B cell (primary cell): ENCODE measurements at regions of chr4 and their contacts with region 1.

Region 1: GRCh38 chr4:77193511-77194102 is 36.6 kb downstream of the CCNG2 start:
- DNase-seq: peak; percentile 91
- ATAC-seq: peak; percentile 92
- H3K4me3 ChIP-seq: peak overlapping the region; percentile 22 to 60 (median 49)
- H3K4me3 Mint-ChIP-seq: peak overlapping the region; percentile 91
- H3K27ac ChIP-seq: peak overlapping the region; percentile 69 to 86
- H3K27ac Mint-ChIP-seq: peak overlapping the region; percentile 97
- H3K4me1 ChIP-seq: peaks cover 36 to 49% of the 10 kb centered on the region in 2 donors
- H3K4me1 Mint-ChIP-seq: peaks cover 52% of the 10 kb centered on the region
- H3K27me3 ChIP-seq: no peaks in the 10 kb centered on the region
- H3K27me3 Mint-ChIP-seq: no peaks in the 10 kb centered on the region
- CTCF ChIP-seq: no peak

Region 2: DNA sequence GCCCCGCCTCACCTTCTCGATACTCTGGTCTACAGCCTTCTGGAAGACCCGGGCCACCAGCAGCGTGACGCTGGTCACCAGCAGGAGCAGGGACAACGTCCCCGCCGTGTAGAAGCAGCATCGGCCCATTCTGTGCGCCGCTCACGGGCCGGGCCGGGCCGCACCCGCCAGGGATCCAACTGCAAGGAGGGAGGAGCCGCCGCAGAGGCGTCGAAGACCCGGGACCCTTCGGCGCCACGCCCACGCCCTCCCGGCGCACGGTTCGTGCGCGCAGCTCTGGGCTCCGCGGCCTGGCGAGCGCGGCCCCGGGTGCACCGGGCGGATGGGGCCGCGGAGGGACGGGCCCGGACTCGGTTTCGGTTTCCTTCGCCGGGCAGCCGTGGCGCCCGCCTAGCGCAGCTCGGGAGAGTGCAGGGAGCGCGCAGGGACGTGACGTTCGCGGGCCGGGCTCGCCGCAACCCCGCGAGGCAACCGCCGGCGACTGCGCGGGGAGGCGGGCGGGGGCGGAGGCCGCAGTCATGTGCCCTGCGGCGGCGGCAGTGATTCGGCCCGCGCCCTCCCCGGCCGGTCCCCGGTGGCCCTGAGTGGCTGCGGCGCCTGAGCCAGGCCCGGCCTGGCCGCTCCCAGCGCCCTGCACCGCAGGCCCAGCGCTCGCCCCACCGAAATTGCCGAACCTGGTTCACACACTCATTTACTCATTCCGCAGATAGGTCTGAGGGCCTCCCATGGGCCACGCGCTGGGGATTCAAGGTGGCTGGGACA is 980.0 kb before region 1 on chr4 and contains the start of gene SCARB2:
- CTCF ChIA-PET with region 1: no interaction called
- POLR2A ChIA-PET with region 1: interaction called, 3 read pairs
- intact Hi-C with region 1: loop called (anchors 10 kb)
- DNase-seq: peak; percentile 91
- ATAC-seq: peak; percentile 79
- H3K4me3 ChIP-seq: peak within 1 kb of the TSS; percentile 54 to 87 (median 71)
- H3K4me3 Mint-ChIP-seq: peak within 1 kb of the TSS; percentile 89
- H3K27ac ChIP-seq: peak within 1 kb of the TSS; percentile 85 to 86
- H3K27ac Mint-ChIP-seq: peak within 1 kb of the TSS; percentile 96
- H3K4me1 ChIP-seq: peaks cover 47 to 49% of the 10 kb centered on the region in 2 donors
- H3K4me1 Mint-ChIP-seq: peaks cover 47% of the 10 kb centered on the region
- H3K27me3 ChIP-seq: no peaks in the 10 kb centered on the region
- H3K27me3 Mint-ChIP-seq: no peaks in the 10 kb centered on the region
- CTCF ChIP-seq: no peak
- total RNA-seq, gene SCARB2: 30.3 and 31.5 TPM in 2 replicates

Region 3: GRCh38 chr4:76949276-76950051 is 244.1 kb before region 1 on chr4 and contains the start of gene SEPTIN11:
- CTCF ChIA-PET with region 1: no interaction called
- POLR2A ChIA-PET with region 1: no interaction called
- intact Hi-C with region 1: loop called (anchors 1 kb)
- DNase-seq: peak; percentile 89
- ATAC-seq: peak; percentile 80
- H3K4me3 ChIP-seq: peak within 1 kb of the TSS; percentile 34 to 87 (median 73)
- H3K4me3 Mint-ChIP-seq: peak within 1 kb of the TSS; percentile 93
- H3K27ac ChIP-seq: peak within 1 kb of the TSS in 1 of 2 donors; percentile 61
- H3K27ac Mint-ChIP-seq: peak within 1 kb of the TSS; percentile 86
- H3K4me1 ChIP-seq: peaks cover 10 to 16% of the 10 kb centered on the region in 2 donors
- H3K4me1 Mint-ChIP-seq: peaks cover 16% of the 10 kb centered on the region
- H3K27me3 ChIP-seq: no peaks in the 10 kb centered on the region
- H3K27me3 Mint-ChIP-seq: no peaks in the 10 kb centered on the region
- CTCF ChIP-seq: no peak
- total RNA-seq, gene SEPTIN11: 20.3 and 22.7 TPM in 2 replicates

Region 4: GRCh38 chr4:77052352-77052751 is 141.3 kb before region 1 on chr4:
- CTCF ChIA-PET with region 1: interaction called, 184 read pairs
- POLR2A ChIA-PET with region 1: no interaction called
- intact Hi-C with region 1: no loop called
- DNase-seq: peak; percentile 70
- ATAC-seq: no peak
- H3K4me3 ChIP-seq: no peak overlapping the region
- H3K4me3 Mint-ChIP-seq: no peak overlapping the region
- H3K27ac ChIP-seq: no peak overlapping the region
- H3K27ac Mint-ChIP-seq: peak overlapping the region; percentile 59
- H3K4me1 ChIP-seq: no peaks in the 10 kb centered on the region
- H3K4me1 Mint-ChIP-seq: no peaks in the 10 kb centered on the region
- H3K27me3 ChIP-seq: no peaks in the 10 kb centered on the region
- H3K27me3 Mint-ChIP-seq: no peaks in the 10 kb centered on the region
- CTCF ChIP-seq: peak; percentile 61

Region 5: GRCh38 chr4:77095101-77095821 is 98.3 kb before region 1 on chr4:
- CTCF ChIA-PET with region 1: interaction called, 444 read pairs
- POLR2A ChIA-PET with region 1: interaction called, 4 read pairs
- intact Hi-C with region 1: loop called (anchors 2 kb)
- DNase-seq: peak; percentile 81
- ATAC-seq: peak; percentile 99
- H3K4me3 ChIP-seq: no peak overlapping the region
- H3K4me3 Mint-ChIP-seq: no peak overlapping the region
- H3K27ac ChIP-seq: no peak overlapping the region
- H3K27ac Mint-ChIP-seq: no peak overlapping the region
- H3K4me1 ChIP-seq: peaks cover 21 to 25% of the 10 kb centered on the region in 2 donors
- H3K4me1 Mint-ChIP-seq: peaks cover 23% of the 10 kb centered on the region
- H3K27me3 ChIP-seq: no peaks in the 10 kb centered on the region
- H3K27me3 Mint-ChIP-seq: no peaks in the 10 kb centered on the region
- CTCF ChIP-seq: peak; percentile 95

Region 6: GRCh38 chr4:77120886-77121508 is 72.6 kb before region 1 on chr4:
- CTCF ChIA-PET with region 1: interaction called, 232 read pairs
- POLR2A ChIA-PET with region 1: interaction called, 4 read pairs
- intact Hi-C with region 1: no loop called
- DNase-seq: peak; percentile 47
- ATAC-seq: peak; percentile 78
- H3K4me3 ChIP-seq: no peak overlapping the region
- H3K4me3 Mint-ChIP-seq: peak overlapping the region; percentile 49
- H3K27ac ChIP-seq: no peak overlapping the region
- H3K27ac Mint-ChIP-seq: peak overlapping the region; percentile 20
- H3K4me1 ChIP-seq: peaks cover 42 to 49% of the 10 kb centered on the region in 2 donors
- H3K4me1 Mint-ChIP-seq: peaks cover 53% of the 10 kb centered on the region
- H3K27me3 ChIP-seq: no peaks in the 10 kb centered on the region
- H3K27me3 Mint-ChIP-seq: no peaks in the 10 kb centered on the region
- CTCF ChIP-seq: peak; percentile 42

Region 7: DNA sequence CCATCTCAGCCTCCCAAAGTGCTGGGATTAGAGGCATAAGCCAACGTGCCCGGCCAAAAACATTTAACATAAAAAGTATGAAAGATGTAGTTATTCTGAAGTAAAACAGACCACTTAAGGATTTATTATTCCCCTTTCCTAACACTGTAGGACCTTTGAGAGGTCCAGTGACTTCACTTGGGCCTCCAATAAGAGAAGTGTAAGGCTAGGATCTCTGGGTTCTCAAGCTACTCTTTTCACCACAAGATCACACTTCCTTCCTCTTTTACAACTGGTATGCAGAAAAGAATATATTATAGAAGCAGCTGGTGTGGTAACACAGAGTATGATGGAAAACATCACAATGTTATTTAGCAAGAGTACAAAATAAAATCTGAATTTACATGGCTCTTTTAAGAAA is 66.8 kb before region 1 on chr4:
- CTCF ChIA-PET with region 1: interaction called, 232 read pairs
- POLR2A ChIA-PET with region 1: interaction called, 7 read pairs
- intact Hi-C with region 1: loop called (anchors 1 kb)
- DNase-seq: peak; percentile 72
- ATAC-seq: peak; percentile 83
- H3K4me3 ChIP-seq: peak overlapping the region in 1 of 5 experiments; percentile 31
- H3K4me3 Mint-ChIP-seq: peak overlapping the region; percentile 59
- H3K27ac ChIP-seq: peak overlapping the region; percentile 81 to 90
- H3K27ac Mint-ChIP-seq: peak overlapping the region; percentile 96
- H3K4me1 ChIP-seq: peaks cover 52 to 66% of the 10 kb centered on the region in 2 donors
- H3K4me1 Mint-ChIP-seq: peaks cover 68% of the 10 kb centered on the region
- H3K27me3 ChIP-seq: no peaks in the 10 kb centered on the region
- H3K27me3 Mint-ChIP-seq: no peaks in the 10 kb centered on the region
- CTCF ChIP-seq: no peak